Sigmoid colon (tissue), 7 donors: ENCODE measurements at regions of chr18 and their contacts with region 1.

Region 1: GRCh38 chr18:46073474-46074331 is 1.6 kb upstream of the PSTPIP2 start:
- DNase-seq: no peak
- H3K4me3 ChIP-seq: no peak overlapping the region
- H3K27ac ChIP-seq: no peak overlapping the region
- H3K4me1 ChIP-seq: peaks cover 0 to 38% (median 35%) of the 10 kb centered on the region in 4 donors
- H3K27me3 ChIP-seq: no peaks in the 10 kb centered on the region
- CTCF ChIP-seq: peak; percentile 40 to 56 (median 50)
- EP300 ChIP-seq: no peak
- POLR2A ChIP-seq: no peak

Region 2: DNA sequence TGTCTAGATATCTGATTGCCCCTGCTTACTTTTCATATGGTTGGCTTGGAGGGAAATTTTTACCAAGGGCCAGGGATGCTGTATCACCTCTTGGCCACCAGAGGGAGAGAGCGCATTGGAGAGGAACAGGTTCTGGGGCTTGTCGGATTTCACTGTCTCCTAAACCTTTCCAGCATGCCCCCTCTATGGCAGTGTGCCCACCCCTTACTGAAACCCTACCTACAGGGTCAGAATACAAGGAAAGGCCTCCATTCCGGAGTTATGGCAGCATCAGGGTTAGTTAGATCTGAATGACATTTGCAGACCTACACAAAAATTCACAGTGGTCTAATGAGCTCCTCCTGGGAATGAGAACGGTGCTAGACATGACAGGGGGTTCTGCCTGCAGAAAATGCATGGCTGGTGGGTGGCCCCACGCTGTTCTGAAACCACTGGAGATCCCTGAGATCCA is 452.6 kb before region 1 on chr18:
- intact Hi-C with region 1: no loop called
- DNase-seq: no peak
- H3K4me3 ChIP-seq: no peak overlapping the region
- H3K27ac ChIP-seq: no peak overlapping the region
- H3K4me1 ChIP-seq: peaks cover 0 to 32% (median 24%) of the 10 kb centered on the region in 4 donors
- H3K27me3 ChIP-seq: no peaks in the 10 kb centered on the region
- CTCF ChIP-seq: peak; percentile 34 to 97 (median 81)
- EP300 ChIP-seq: no peak
- POLR2A ChIP-seq: no peak

Region 3: DNA sequence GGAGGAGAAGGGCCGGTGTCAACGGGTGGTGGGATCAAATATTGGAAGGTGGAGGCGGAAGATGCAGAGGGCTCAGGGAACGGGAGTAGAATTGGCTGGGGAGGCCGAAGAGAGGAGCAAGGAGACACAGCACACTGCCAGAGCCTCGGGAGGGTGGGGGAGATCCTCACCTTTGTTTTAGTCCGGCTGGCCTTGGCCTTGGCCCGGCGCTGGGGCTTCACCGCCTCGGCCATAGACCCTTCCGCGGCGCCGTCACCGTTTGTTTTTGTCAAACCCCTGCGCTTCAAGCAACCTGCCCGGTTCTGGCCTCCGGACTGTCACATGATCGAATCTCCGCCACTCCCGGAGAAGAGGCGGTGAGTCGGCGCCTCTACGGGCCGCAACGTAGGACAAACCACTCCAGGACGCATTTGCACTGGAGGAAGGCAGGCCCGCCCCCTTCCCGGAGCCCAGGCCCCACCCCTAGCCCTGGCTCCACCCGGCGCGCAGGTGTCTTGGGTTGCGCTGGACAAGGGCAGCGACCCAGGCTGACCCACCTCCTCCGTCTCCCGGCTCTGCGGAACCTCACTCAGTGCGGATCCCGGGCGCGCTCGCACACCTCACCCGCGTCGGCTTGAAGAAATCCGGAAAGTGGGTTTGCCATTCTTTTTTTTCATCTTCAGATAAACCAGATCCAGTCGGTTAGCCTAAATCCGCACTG is 106.5 kb before region 1 on chr18 and contains the start of gene EPG5:
- intact Hi-C with region 1: loop called (anchors 2 kb)
- DNase-seq: peak; percentile 97
- H3K4me3 ChIP-seq: peak within 1 kb of the TSS; percentile 72 to 86 (median 82)
- H3K27ac ChIP-seq: peak within 1 kb of the TSS; percentile 71 to 75 (median 74)
- H3K4me1 ChIP-seq: peaks cover 0 to 21% (median 15%) of the 10 kb centered on the region in 4 donors
- H3K27me3 ChIP-seq: no peaks in the 10 kb centered on the region
- CTCF ChIP-seq: no peak
- EP300 ChIP-seq: no peak
- POLR2A ChIP-seq: peak; percentile 22 to 39
- total RNA-seq, gene EPG5: 17.1 to 29.1 (median 26.9) TPM

Region 4: DNA sequence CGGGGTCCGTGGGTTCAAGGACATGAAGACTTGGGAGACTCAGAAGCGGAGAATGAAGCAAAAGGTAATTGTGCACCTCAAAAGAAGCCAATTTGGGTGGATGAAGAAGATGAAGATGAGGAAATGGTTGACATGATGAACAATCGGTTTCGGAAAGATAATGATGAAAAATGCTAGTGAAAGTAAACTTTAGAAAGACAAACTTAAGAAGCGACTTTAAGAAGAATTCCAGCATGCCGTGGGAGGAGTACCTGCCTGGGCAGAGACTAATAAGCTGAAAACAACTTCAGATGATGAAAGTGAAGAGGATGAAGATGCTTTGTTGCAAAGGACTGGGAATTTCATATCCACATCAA is 45.2 kb before region 1 on chr18:
- intact Hi-C with region 1: loop called (anchors 2 kb)
- DNase-seq: no peak
- H3K4me3 ChIP-seq: peak overlapping the region; percentile 36 to 58 (median 54)
- H3K27ac ChIP-seq: peak overlapping the region in 3 of 4 donors; percentile 71 to 77 (median 71)
- H3K4me1 ChIP-seq: peaks cover 0 to 14% (median 11%) of the 10 kb centered on the region in 4 donors
- H3K27me3 ChIP-seq: no peaks in the 10 kb centered on the region
- CTCF ChIP-seq: no peak
- EP300 ChIP-seq: no peak
- POLR2A ChIP-seq: no peak

Region 5: DNA sequence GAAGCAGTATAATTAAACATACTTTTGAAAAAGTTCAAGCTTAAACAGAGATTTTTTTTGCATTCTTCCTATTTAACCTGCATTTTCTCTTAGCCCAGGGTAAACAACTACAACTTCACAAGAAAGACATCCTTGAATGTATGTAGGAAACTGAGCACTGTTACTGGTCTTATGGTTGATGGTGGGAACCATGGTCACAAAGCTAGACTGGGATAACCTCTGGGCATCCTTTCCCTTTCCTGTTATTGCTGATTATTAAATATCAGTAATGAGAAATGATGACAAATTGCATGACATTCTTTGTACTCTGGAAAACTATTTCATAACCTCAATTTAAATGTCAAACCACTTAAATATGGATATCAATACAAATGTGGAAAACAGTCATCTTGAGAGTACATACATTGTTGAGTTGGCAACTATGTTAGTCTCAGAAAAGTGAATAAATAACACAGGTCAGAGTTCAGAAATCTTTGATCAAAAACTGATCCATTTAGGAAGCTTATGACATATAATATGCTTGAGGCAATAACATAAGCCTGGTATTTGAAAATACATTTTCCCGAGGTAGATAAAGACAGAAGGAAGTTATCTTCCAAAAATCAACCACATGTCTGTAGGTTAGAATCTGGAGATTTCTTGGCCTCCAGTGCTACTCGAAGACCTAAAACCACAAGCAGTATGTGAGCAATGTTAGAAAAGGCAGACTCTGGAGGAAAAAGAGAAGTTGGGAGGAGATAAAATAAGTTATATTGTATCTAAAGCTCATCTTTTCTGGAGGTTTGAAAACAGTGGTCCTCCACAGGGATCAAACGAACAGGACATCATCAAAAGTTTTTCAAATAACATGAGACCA is 748.4 kb after region 1 on chr18:
- intact Hi-C with region 1: no loop called
- DNase-seq: no peak
- H3K4me3 ChIP-seq: no peak overlapping the region
- H3K27ac ChIP-seq: no peak overlapping the region
- H3K4me1 ChIP-seq: no peaks in the 10 kb centered on the region
- H3K27me3 ChIP-seq: no peaks in the 10 kb centered on the region
- CTCF ChIP-seq: no peak
- EP300 ChIP-seq: no peak
- POLR2A ChIP-seq: no peak